ENCODE measurements at regions of chr13 and their contacts with region 1.

Region 1: DNA sequence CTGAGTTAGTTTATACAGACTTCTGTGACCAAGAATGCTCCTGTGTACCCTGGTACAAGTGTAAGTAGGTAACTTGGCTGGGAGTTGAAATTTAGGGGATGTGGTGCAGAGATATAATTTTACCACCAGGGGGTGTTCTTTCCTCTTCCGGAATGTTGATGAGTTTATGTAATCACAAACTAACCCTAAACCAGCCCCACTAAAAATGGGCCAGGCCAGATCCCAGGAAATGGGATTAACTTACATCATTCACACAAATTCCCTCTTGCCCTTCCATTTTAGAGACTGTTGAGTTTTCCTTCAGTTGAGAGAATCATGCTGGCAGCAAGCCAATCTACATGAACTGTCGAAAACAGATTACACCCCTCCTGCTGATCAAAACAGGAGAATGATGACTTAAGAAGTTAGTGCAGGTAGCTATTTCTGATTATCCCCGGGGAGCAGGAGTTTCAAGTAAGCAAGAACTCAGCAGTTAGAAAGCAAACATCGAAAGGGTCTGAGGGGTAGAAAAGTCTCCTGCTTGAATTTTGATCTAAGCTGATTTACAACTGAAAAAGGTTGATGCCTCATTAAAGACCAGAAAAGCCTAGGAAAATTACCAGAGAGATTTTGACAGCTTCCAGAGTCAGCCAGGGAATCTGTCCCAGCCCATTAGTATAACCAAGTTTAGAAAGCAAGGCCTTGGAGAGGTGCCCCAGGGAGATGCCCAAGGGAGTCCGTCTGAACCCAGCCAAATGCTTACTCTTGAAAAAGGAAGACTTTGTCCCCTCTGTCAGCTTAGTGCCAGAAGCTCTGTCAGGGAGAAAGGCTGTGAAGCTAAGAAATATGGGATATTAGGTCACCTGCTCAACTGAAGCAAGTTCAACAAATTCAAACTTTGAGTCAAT is 32.3 kb upstream of the MED4 start:
- DNase-seq: peak; percentile 19
- H3K4me3 ChIP-seq: no peak overlapping the region
- H3K27ac ChIP-seq: peak overlapping the region; percentile 49 to 78 (median 72)
- H3K4me1 ChIP-seq: peaks cover 3 to 28% (median 10%) of the 10 kb centered on the region in 4 donors
- H3K27me3 ChIP-seq: no peaks in the 10 kb centered on the region
- CTCF ChIP-seq: peak; percentile 76 to 84 (median 82)
- EP300 ChIP-seq: no peak
- POLR2A ChIP-seq: no peak

Region 2: GRCh38 chr13:47334173-47334572 is 793.0 kb before region 1 on chr13:
- in situ Hi-C with region 1: no loop called
- intact Hi-C with region 1: no loop called
- DNase-seq: no peak
- H3K4me3 ChIP-seq: no peak overlapping the region
- H3K27ac ChIP-seq: no peak overlapping the region
- H3K4me1 ChIP-seq: no peaks in the 10 kb centered on the region
- H3K27me3 ChIP-seq: no peaks in the 10 kb centered on the region
- CTCF ChIP-seq: no peak
- EP300 ChIP-seq: no peak
- POLR2A ChIP-seq: no peak

Region 3: DNA sequence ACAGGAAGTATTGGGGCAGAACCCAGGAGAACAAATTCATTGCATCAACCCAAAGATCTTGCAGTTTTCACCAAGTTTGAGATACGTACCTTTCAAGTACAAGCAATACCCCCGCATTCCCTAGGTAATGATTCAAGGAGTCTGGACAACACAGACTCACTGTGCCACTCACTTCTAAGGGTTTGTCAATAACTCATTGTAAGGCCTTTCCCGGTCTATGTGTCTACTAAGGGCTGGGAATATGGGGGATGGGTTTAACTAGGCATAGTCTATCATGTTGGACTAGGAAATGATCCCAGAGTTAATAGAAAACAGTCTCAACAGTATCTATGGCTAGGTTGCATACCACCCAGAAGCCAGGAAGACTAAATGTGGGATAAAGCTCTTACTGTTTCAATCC is 97.5 kb after region 1 on chr13:
- in situ Hi-C with region 1: loop called in 1 of 4 experiments (anchors 5 kb)
- intact Hi-C with region 1: no loop called
- DNase-seq: no peak
- H3K4me3 ChIP-seq: no peak overlapping the region
- H3K27ac ChIP-seq: no peak overlapping the region
- H3K4me1 ChIP-seq: peaks cover 0 to 29% (median 4%) of the 10 kb centered on the region in 4 donors
- H3K27me3 ChIP-seq: no peaks in the 10 kb centered on the region
- CTCF ChIP-seq: no peak
- EP300 ChIP-seq: no peak
- POLR2A ChIP-seq: no peak

Region 4: GRCh38 chr13:48233046-48233907 is 106.1 kb after region 1 on chr13 and contains the start of gene ITM2B:
- in situ Hi-C with region 1: loop called in 2 of 4 experiments (anchors 5 to 10 kb)
- intact Hi-C with region 1: loop called (anchors 10 kb)
- DNase-seq: peak; percentile 82
- H3K4me3 ChIP-seq: peak within 1 kb of the TSS; percentile 89 to 99 (median 99)
- H3K27ac ChIP-seq: peak within 1 kb of the TSS; percentile 99 to 100 (median 99)
- H3K4me1 ChIP-seq: peaks cover 9 to 52% (median 35%) of the 10 kb centered on the region in 4 donors
- H3K27me3 ChIP-seq: no peaks in the 10 kb centered on the region
- CTCF ChIP-seq: peak; percentile 8 to 54 (median 33)
- EP300 ChIP-seq: no peak
- POLR2A ChIP-seq: peak; percentile 86
- total RNA-seq, gene ITM2B: 117 to 352 (median 310) TPM

Region 5: DNA sequence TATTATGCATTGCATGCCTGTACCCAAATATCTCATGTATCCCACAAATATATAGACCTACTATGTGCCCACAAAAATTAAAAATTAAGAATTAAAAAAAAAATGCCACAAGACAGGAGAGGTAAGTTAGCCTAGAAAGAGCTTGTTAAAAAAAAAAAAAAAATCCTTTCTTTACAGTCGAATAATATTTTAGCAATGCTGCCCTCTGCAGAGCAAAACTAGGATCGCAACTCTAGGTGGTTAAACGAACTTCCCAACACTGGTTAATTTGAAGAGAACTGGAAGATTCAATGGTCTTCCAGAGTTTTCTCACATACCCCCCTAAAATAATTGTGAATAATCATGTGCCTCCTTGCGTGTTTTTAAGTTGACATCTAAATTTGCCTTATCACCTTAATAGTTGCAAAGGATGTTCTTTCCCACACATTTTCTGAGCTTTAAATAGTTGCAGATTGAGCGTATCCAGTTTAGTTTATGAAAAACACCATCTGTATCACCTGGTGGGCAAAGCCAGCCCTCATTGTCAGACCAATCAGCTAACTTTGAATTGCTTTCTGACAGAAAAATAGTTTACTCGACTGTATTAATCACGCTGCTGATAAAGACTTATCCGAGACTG is 453.1 kb after region 1 on chr13:
- in situ Hi-C with region 1: loop called in 2 of 4 experiments (anchors 10 kb)
- intact Hi-C with region 1: no loop called
- DNase-seq: peak; percentile 84
- H3K4me3 ChIP-seq: no peak overlapping the region
- H3K27ac ChIP-seq: peak overlapping the region; percentile 1 to 50 (median 18)
- H3K4me1 ChIP-seq: peaks cover under 1 to 23% (median 11%) of the 10 kb centered on the region in 4 donors
- H3K27me3 ChIP-seq: no peaks in the 10 kb centered on the region
- CTCF ChIP-seq: peak; percentile 65 to 82 (median 76)
- EP300 ChIP-seq: no peak
- POLR2A ChIP-seq: no peak

Measured in transverse colon (tissue), 4 donors.